ENCODE measurements at regions of chr16 and their contacts with region 1.

Region 1: DNA sequence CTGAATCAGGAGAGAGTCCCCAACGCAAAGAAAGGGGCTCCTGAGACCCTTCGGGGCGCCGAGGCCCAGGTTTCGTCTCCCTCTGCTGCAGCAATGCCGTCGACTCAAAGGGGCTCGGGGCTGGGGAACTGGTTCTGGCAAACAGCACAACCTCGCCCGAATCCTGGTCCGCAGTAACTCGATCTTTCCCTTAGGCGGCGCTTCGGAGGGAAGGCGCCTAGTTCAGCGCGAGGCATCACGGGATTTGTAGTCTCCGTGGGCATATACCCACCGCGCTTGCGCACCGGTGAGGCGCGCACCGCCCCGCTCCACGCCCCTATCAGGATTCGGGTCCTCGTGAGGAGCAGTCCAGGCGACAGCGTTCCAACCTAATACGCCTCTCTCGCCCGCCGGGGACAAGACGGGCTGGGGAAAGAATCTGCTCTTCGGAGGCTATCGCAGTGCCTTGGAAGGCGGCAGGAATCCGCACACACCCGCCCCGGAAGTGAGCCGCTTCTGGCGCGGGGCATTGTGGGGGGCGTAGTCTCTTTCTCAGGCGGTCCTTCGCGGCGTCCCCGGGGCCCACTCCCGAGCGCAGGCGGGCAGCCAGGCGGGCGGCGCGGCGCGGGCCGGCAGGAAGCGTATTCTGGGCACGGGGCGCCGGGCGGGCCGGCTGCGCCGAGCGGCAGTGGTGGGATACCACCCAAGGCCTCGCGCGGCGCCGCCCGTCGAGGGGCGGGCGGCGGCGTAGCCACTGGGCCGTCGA is at the start of gene THAP11:
- DNase-seq: peak; percentile 67 to 97
- H3K4me3 ChIP-seq: peak within 1 kb of the TSS; percentile 86 to 96
- H3K27ac ChIP-seq: peak within 1 kb of the TSS; percentile 98 to 100
- H3K4me1 ChIP-seq: peaks cover 30 to 31% of the 10 kb centered on the region in 2 donors
- H3K27me3 ChIP-seq: no peaks in the 10 kb centered on the region
- CTCF ChIP-seq: peak; percentile 88 to 94 (median 93)
- total RNA-seq, gene THAP11: 85.4 TPM

Region 2: DNA sequence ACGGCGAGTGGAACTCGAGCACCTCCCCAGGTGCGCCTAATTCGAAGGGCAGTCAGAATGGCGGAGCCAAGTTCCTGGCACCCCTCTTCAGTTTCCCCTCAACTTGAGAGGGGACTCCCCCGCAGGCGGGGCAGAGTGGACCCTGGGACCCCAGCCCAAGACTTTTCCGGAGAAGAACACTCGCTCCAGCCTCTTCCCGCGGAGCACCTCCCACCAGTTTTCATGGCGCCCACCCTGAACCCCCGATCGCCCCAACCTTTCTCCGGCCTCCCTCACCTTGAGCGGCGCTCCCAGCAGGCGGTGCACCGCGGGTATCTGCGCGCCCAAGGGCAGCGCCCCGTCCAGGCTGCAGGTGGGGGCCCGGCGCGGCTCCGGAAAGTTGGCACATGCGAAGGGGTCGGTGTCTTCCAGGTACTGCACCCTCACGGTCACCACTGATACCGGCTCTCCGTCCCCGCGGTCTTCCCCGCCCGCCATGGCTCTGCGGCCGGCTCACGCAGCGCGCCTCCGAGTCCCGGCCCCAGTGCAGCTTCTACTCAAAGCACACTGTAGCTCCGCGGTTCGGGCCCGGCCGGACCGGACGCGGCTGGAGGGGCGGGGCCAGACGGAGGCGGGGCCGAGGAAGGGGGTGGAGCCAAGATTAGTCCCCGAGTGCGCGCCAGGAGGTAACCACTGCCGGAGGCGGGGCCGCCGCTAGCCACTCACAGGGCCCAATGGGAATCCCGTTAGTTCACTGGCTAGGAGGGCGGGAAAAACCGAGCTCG is 594.8 kb before region 1 on chr16 and contains the start of gene FHOD1:
- intact Hi-C with region 1: loop called (anchors 10 kb)
- DNase-seq: peak; percentile 94 to 99
- H3K4me3 ChIP-seq: peak within 1 kb of the TSS; percentile 69 to 71
- H3K27ac ChIP-seq: peak within 1 kb of the TSS; percentile 82 to 89
- H3K4me1 ChIP-seq: peaks cover 28 to 31% of the 10 kb centered on the region in 2 donors
- H3K27me3 ChIP-seq: peaks cover 6% of the 10 kb centered on the region
- CTCF ChIP-seq: no peak
- total RNA-seq, gene FHOD1: 20.2 TPM

Region 3: DNA sequence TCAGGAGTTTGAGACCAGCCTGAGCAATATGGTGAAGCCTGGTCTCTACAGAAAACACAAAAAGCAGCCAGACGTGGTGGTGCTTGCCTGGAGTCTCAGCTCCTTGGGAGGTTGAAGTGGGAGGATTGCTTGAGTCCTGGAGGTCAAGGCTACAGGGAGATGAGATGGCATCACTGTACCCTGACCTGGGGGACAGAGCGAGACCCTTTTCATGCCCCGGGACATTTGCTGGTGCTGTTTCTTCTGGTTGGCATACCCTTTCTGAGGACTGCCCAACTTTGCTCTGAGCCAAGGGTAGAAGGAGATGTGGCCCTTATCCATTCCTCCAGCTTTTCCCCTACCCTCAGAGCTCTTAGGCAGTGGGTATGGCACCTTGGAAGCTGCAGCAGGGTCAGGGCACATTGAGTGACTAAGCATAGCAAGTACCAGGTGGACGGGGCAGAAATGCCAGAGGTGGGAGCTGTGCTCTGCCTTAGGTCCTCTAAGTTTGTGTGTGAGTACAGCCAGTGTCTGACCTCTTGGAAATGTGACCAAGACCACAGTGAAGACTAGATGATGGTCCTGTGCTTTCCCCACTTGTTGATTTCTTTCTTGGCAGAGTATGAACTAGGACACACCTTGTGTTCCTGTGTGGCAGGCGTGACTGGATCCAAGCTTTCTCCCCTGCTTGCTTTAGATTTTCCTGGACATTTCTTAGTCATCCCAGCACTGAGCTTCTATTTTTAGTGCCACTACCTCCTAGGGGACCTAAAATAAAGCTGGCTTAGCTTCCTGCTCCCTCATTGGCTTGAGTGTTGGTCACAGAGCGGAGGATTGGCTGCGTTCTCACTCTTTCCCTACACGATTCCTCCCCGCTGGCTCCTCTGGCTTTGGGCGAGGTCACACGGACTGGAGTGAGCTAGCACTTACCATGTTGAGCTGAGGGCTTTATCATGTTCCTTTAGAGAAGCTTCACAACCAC is 21.0 kb after region 1 on chr16:
- intact Hi-C with region 1: loop called (anchors 1 kb)
- DNase-seq: peak; percentile 65 to 95
- H3K4me3 ChIP-seq: peak overlapping the region; percentile 17 to 29
- H3K27ac ChIP-seq: peak overlapping the region; percentile 90 to 95
- H3K4me1 ChIP-seq: peaks cover 26 to 42% of the 10 kb centered on the region in 2 donors
- H3K27me3 ChIP-seq: no peaks in the 10 kb centered on the region
- CTCF ChIP-seq: no peak

Region 4: GRCh38 chr16:67872786-67873537 is 31.0 kb after region 1 on chr16 and contains the start of gene EDC4:
- intact Hi-C with region 1: loop called (anchors 1 kb)
- DNase-seq: peak; percentile 41 to 93
- H3K4me3 ChIP-seq: peak within 1 kb of the TSS; percentile 87 to 91
- H3K27ac ChIP-seq: peak within 1 kb of the TSS; percentile 83 to 86
- H3K4me1 ChIP-seq: peaks cover 0 to 15% of the 10 kb centered on the region in 2 donors
- H3K27me3 ChIP-seq: no peaks in the 10 kb centered on the region
- CTCF ChIP-seq: no peak
- total RNA-seq, gene EDC4: 125 TPM

Region 5: GRCh38 chr16:67892899-67893742 is 51.2 kb after region 1 on chr16 and contains the start of gene PSKH1:
- intact Hi-C with region 1: loop called (anchors 2 kb)
- DNase-seq: peak; percentile 82 to 98
- H3K4me3 ChIP-seq: peak within 1 kb of the TSS; percentile 99 to 100
- H3K27ac ChIP-seq: peak within 1 kb of the TSS; percentile 96 to 99
- H3K4me1 ChIP-seq: peaks cover 19 to 43% of the 10 kb centered on the region in 2 donors
- H3K27me3 ChIP-seq: no peaks in the 10 kb centered on the region
- CTCF ChIP-seq: no peak
- total RNA-seq, gene PSKH1: 41.0 TPM

Region 6: GRCh38 chr16:67935402-67936123 is 93.6 kb after region 1 on chr16:
- intact Hi-C with region 1: loop called (anchors 2 kb)
- DNase-seq: peak; percentile 88 to 96
- H3K4me3 ChIP-seq: peak overlapping the region; percentile 65 to 85
- H3K27ac ChIP-seq: peak overlapping the region; percentile 88 to 92
- H3K4me1 ChIP-seq: peaks cover 7 to 16% of the 10 kb centered on the region in 2 donors
- H3K27me3 ChIP-seq: no peaks in the 10 kb centered on the region
- CTCF ChIP-seq: peak in 1 of 3 experiments; percentile 14

Region 7: GRCh38 chr16:69339289-69340108 is 1497.6 kb after region 1 on chr16 and contains the starts of genes COG8 and NIP7:
- intact Hi-C with region 1: loop called (anchors 10 kb)
- DNase-seq: peak; percentile 88 to 98
- H3K4me3 ChIP-seq: peak within 1 kb of the TSS; percentile 93 to 95
- H3K27ac ChIP-seq: peak within 1 kb of the TSS; percentile 88 to 91
- H3K4me1 ChIP-seq: peaks cover 12 to 23% of the 10 kb centered on the region in 2 donors
- H3K27me3 ChIP-seq: no peaks in the 10 kb centered on the region
- CTCF ChIP-seq: peak; percentile 80 to 94 (median 82)
- total RNA-seq, gene COG8: 24.7 TPM
- total RNA-seq, gene NIP7: 5.2 TPM

Measured in ascending aorta (tissue), 2 donors.